ENCODE measurements at regions of chr2 and their contacts with region 1.

Region 1: GRCh38 chr2:236180831-236181453 is 12.8 kb upstream of the GBX2 start:
- DNase-seq: peak; percentile 78
- ATAC-seq: peak; percentile 11; the same call in 1 of the 2 replicates
- H3K4me3 Mint-ChIP-seq: no peak overlapping the region
- H3K27ac Mint-ChIP-seq: no peak overlapping the region
- H3K4me1 Mint-ChIP-seq: peaks cover 23% of the 10 kb centered on the region
- H3K27me3 Mint-ChIP-seq: peaks cover 40% of the 10 kb centered on the region
- CTCF ChIP-seq: peak; percentile 78

Region 2: GRCh38 chr2:235779444-235779896 is 401.5 kb before region 1 on chr2:
- CTCF ChIA-PET with region 1: interaction called, 41 read pairs
- POLR2A ChIA-PET with region 1: no interaction called
- DNase-seq: peak; percentile 92
- ATAC-seq: peak; percentile 98
- H3K4me3 Mint-ChIP-seq: no peak overlapping the region
- H3K27ac Mint-ChIP-seq: peak overlapping the region; percentile 24; the same call in 1 of the 2 replicates
- H3K4me1 Mint-ChIP-seq: peaks cover 13% of the 10 kb centered on the region
- H3K27me3 Mint-ChIP-seq: no peaks in the 10 kb centered on the region
- CTCF ChIP-seq: peak; percentile 53; the same call in 1 of the 2 replicates

Region 3: GRCh38 chr2:235936493-235936892 is 244.4 kb before region 1 on chr2:
- CTCF ChIA-PET with region 1: interaction called, 26 read pairs
- POLR2A ChIA-PET with region 1: no interaction called
- DNase-seq: peak; percentile 56
- ATAC-seq: peak; percentile 64
- H3K4me3 Mint-ChIP-seq: no peak overlapping the region
- H3K27ac Mint-ChIP-seq: 0 out of 2 replicates have a peak overlapping the region, but pooled peaks have one; percentile 62
- H3K4me1 Mint-ChIP-seq: peaks cover 26% of the 10 kb centered on the region
- H3K27me3 Mint-ChIP-seq: no peaks in the 10 kb centered on the region
- CTCF ChIP-seq: peak; percentile 71

Region 4: GRCh38 chr2:235979451-235980435 is 201.2 kb before region 1 on chr2:
- CTCF ChIA-PET with region 1: interaction called, 10 read pairs
- POLR2A ChIA-PET with region 1: no interaction called
- DNase-seq: no peak
- ATAC-seq: no peak
- H3K4me3 Mint-ChIP-seq: no peak overlapping the region
- H3K27ac Mint-ChIP-seq: peak overlapping the region; percentile 44
- H3K4me1 Mint-ChIP-seq: peaks cover 11% of the 10 kb centered on the region
- H3K27me3 Mint-ChIP-seq: no peaks in the 10 kb centered on the region
- CTCF ChIP-seq: no peak

Region 5: GRCh38 chr2:236082061-236082460 is 98.9 kb before region 1 on chr2:
- CTCF ChIA-PET with region 1: interaction called, 12 read pairs
- POLR2A ChIA-PET with region 1: no interaction called
- DNase-seq: no peak
- ATAC-seq: no peak
- H3K4me3 Mint-ChIP-seq: no peak overlapping the region
- H3K27ac Mint-ChIP-seq: peak overlapping the region; percentile 60
- H3K4me1 Mint-ChIP-seq: peaks cover 54% of the 10 kb centered on the region
- H3K27me3 Mint-ChIP-seq: no peaks in the 10 kb centered on the region
- CTCF ChIP-seq: no peak

Region 6: GRCh38 chr2:236168110-236169067 is 12.6 kb before region 1 on chr2 and contains the start of gene GBX2:
- CTCF ChIA-PET with region 1: interaction called, 35 read pairs
- POLR2A ChIA-PET with region 1: no interaction called
- DNase-seq: peak; percentile 90
- ATAC-seq: peak; percentile 35
- H3K4me3 Mint-ChIP-seq: peak within 1 kb of the TSS; percentile 71
- H3K27ac Mint-ChIP-seq: no peak within 1 kb of the TSS
- H3K4me1 Mint-ChIP-seq: peaks cover 57% of the 10 kb centered on the region
- H3K27me3 Mint-ChIP-seq: peaks cover 86% of the 10 kb centered on the region
- CTCF ChIP-seq: no peak
- total RNA-seq, gene GBX2: 15.3 to 25.6 TPM (median 19.1 TPM) in 3 replicates

Region 7: DNA sequence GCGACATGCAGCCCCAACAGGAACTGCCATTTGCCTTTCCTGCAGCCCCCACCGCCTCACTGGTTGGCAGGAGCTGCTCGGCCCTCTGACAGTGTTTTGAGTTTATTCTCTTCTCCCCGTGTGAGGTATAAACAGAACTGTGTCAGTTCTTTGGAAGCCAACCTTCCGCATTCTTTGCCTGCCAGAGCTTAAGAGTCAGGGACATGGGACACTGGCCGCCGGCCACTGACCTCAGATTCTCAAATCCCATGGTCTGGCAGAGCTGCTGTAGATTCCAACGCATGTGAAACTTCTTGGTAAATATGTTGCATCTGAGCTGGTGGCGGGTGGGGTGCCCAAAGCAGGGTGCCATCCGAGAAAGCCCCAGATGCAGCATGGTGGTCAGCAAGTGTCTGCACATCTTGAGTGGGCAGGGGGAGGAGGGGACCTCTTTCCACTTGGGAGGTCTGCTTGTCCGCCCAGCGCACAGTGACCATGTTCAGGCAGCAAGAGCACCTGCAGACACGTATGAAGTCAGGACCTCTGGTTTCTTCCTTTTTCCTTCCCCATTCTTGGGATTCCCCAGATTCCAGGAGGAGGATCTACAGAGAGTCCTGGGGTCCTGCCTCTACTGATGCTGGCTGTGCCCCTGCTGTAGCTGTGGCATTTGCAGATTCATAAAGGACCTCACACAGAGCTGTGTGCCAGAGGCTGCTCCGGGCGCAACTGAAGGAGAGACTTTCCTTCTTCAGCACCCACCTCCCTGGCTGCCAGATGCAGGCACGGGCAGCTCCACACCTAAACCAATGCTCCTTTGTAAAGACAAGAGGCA is 59.5 kb after region 1 on chr2:
- CTCF ChIA-PET with region 1: interaction called, 14 read pairs
- POLR2A ChIA-PET with region 1: no interaction called
- DNase-seq: no peak
- ATAC-seq: peak; percentile 57
- H3K4me3 Mint-ChIP-seq: no peak overlapping the region
- H3K27ac Mint-ChIP-seq: no peak overlapping the region
- H3K4me1 Mint-ChIP-seq: peaks cover 39% of the 10 kb centered on the region
- H3K27me3 Mint-ChIP-seq: peaks cover 42% of the 10 kb centered on the region
- CTCF ChIP-seq: no peak

Region 8: GRCh38 chr2:236298924-236299475 is 118.1 kb after region 1 on chr2:
- CTCF ChIA-PET with region 1: no interaction called
- POLR2A ChIA-PET with region 1: no interaction called
- DNase-seq: no peak
- ATAC-seq: no peak
- H3K4me3 Mint-ChIP-seq: no peak overlapping the region
- H3K27ac Mint-ChIP-seq: no peak overlapping the region
- H3K4me1 Mint-ChIP-seq: no peaks in the 10 kb centered on the region
- H3K27me3 Mint-ChIP-seq: no peaks in the 10 kb centered on the region; the same call in 1 of the 2 replicates
- CTCF ChIP-seq: no peak